ENCODE measurements at regions of chr14 and their contacts with region 1.

Region 1: GRCh38 chr14:104708606-104709268 is 15.3 kb upstream of the ADSS1 start:
- DNase-seq: peak; percentile 40 to 64
- ATAC-seq: peak; percentile 73 to 84
- H3K4me3 ChIP-seq: no peak overlapping the region
- H3K27ac ChIP-seq: no peak overlapping the region
- H3K4me1 ChIP-seq: peaks cover 0 to 15% of the 10 kb centered on the region in 2 donors
- H3K27me3 ChIP-seq: no peaks in the 10 kb centered on the region
- CTCF ChIP-seq: peak; percentile 92 to 99 (median 95)
- POLR2A ChIP-seq: no peak

Region 2: GRCh38 chr14:104650057-104650981 is 58.4 kb before region 1 on chr14:
- in situ Hi-C with region 1: loop called in 2 of 4 experiments (anchors 5 kb)
- intact Hi-C with region 1: loop called (anchors 1 kb)
- DNase-seq: no peak
- ATAC-seq: peak in 1 of 2 donors; percentile 78
- H3K4me3 ChIP-seq: peak overlapping the region; percentile 26 to 41 (median 36)
- H3K27ac ChIP-seq: no peak overlapping the region
- H3K4me1 ChIP-seq: peaks cover 0 to 9% of the 10 kb centered on the region in 2 donors
- H3K27me3 ChIP-seq: peaks cover 0 to 1% (median 0%) of the 10 kb centered on the region in 3 donors
- CTCF ChIP-seq: peak; percentile 76 to 99 (median 93)
- POLR2A ChIP-seq: no peak

Measured in gastrocnemius medialis (tissue), 4 donors.